ENCODE measurements at regions of chr6 and their contacts with region 1.

Region 1: DNA sequence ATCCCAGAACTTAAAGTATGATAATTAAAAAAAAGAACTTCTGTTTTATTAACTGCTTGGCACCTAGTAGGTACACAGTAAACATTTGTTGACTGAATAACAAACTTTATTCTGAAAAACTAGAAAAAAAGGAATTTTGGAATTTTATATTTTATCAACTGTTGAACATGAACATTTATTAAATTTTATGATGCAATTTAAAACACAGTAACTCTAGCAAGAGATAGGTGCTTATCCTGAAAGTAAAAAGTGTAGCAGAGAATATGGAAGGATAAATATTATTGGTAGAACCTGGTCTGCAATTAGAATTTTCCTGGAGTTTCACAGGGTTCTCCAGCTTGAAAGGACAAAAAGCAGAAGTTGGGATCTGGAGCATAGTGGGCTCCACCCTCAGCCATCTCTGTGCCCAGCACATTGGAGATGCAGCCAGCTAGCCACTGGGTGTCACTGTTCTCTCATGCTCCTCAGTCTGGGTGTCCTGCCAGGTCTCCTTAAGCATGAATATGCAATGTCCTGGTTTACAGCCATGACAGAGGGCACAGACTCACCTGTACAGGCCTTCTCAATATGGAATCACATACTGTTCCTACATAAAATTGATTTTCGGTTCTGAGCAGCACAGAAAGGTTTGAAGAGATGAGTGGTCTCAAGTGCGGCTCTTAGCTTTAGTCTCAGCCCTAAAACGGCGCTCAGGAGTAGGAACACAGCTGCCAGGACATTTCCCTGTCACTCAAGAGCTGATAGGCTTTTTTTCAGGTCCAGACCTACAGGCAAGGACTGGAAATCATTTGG is 31.7 kb upstream of the IL20RA start:
- DNase-seq: peak; percentile 65
- H3K4me3 ChIP-seq: no peak overlapping the region; a peak in 1 of 4 replicates
- H3K27ac ChIP-seq: no peak overlapping the region; a peak in 1 of 4 replicates
- H3K4me1 ChIP-seq: no peaks in the 10 kb centered on the region; a peak in 1 of 4 replicates
- H3K27me3 ChIP-seq: no peaks in the 10 kb centered on the region
- CTCF ChIP-seq: peak; percentile 64
- EP300 ChIP-seq: no peak
- RAD21 ChIP-seq: peak; percentile 81

Region 2: GRCh38 chr6:136859430-136859829 is 217.0 kb before region 1 on chr6:
- CTCF ChIA-PET with region 1: no interaction called
- POLR2A ChIA-PET with region 1: no interaction called
- DNase-seq: no peak
- H3K4me3 ChIP-seq: no peak overlapping the region
- H3K27ac ChIP-seq: no peak overlapping the region
- H3K4me1 ChIP-seq: peaks cover 0 to 2% of the 10 kb centered on the region in 2 experiments; a peak in 1 of 4 replicates
- H3K27me3 ChIP-seq: no peaks in the 10 kb centered on the region
- CTCF ChIP-seq: no peak
- EP300 ChIP-seq: no peak
- RAD21 ChIP-seq: no peak

Region 3: GRCh38 chr6:137089305-137089704 is 12.8 kb after region 1 on chr6:
- CTCF ChIA-PET with region 1: interaction called, 39 read pairs
- POLR2A ChIA-PET with region 1: interaction called, 4 read pairs
- DNase-seq: no peak
- H3K4me3 ChIP-seq: no peak overlapping the region
- H3K27ac ChIP-seq: no peak overlapping the region
- H3K4me1 ChIP-seq: peaks cover 0 to 2% of the 10 kb centered on the region in 2 experiments; a peak in 1 of 4 replicates
- H3K27me3 ChIP-seq: no peaks in the 10 kb centered on the region; the same call in 1 of the 2 replicates
- CTCF ChIP-seq: no peak
- EP300 ChIP-seq: no peak
- RAD21 ChIP-seq: no peak

Measured in SK-N-SH (cell line).